HepG2 (cell line): ENCODE measurements at regions of chr6 and their contacts with region 1.

Region 1: DNA sequence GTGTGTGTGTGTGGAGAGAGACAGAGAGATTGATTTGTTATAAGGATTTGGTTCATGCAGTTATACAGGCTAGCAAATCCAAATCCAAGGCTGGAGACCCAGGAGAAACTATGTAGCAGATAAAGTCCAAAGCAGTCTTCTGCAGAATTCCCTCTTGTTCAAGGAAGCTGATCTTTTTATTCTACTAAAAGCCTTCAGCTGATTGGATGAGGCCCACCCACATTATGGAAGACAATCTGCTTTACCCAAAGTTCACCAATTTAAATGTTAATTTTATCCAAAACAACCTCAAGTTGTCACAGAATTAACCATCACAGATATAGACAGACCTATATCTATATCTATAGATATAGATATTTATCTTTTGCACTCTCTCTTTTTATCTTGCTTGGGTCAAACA is 67.0 kb downstream of the TPBG start:
- DNase-seq: no peak
- ATAC-seq: no peak
- H3K4me3 ChIP-seq: no peak overlapping the region
- H3K27ac ChIP-seq: no peak overlapping the region
- H3K4me1 ChIP-seq: no peaks in the 10 kb centered on the region
- H3K27me3 ChIP-seq: no peaks in the 10 kb centered on the region
- CTCF ChIP-seq: no peak
- EP300 ChIP-seq: no peak
- POLR2A ChIP-seq: no peak
- RAD21 ChIP-seq: no peak

Region 2: DNA sequence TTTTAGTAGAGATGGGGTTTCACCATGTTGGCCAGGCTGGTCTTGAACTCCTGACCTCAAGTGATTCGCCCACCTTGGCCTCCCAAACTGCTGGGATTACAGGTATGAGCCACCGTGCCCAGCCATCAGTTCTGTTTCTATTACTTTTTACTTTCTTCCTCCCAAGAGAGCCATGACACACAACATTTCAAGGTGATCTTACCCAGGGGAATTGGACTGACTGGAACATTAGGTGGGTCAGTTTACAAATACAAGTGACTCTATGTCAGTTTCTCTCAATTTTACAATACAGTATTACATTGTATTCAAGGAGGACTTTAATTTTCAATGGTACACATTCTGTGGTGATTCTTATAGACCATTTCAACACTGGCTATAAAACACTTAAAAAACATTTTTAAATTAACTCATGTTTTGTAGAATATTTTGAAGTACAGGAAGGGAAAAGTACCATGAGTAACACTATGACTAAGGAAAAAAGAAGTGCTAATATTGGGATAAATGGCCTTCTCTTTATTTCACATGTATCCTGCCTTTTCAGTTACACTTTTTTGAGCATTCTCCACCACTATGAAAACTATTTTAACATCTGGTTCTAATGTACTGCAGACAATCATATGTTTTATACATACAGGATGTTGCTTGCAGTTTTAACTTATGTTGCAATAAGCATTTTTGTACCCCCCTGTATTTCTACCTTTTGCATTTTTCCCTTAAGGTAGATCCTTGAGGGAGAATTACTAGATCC is 58.6 kb before region 1 on chr6:
- CTCF ChIA-PET with region 1: no interaction called
- POLR2A ChIA-PET with region 1: no interaction called
- in situ Hi-C with region 1: no loop called
- intact Hi-C with region 1: no loop called
- DNase-seq: no peak
- ATAC-seq: no peak
- H3K4me3 ChIP-seq: no peak overlapping the region
- H3K27ac ChIP-seq: no peak overlapping the region
- H3K4me1 ChIP-seq: no peaks in the 10 kb centered on the region
- H3K27me3 ChIP-seq: no peaks in the 10 kb centered on the region
- CTCF ChIP-seq: no peak
- EP300 ChIP-seq: no peak
- POLR2A ChIP-seq: no peak
- RAD21 ChIP-seq: no peak

Region 3: GRCh38 chr6:82396964-82397751 is 33.5 kb before region 1 on chr6:
- CTCF ChIA-PET with region 1: no interaction called
- POLR2A ChIA-PET with region 1: no interaction called
- in situ Hi-C with region 1: no loop called
- intact Hi-C with region 1: loop called (anchors 2 kb)
- DNase-seq: no peak
- ATAC-seq: no peak
- H3K4me3 ChIP-seq: no peak overlapping the region
- H3K27ac ChIP-seq: no peak overlapping the region
- H3K4me1 ChIP-seq: no peaks in the 10 kb centered on the region
- H3K27me3 ChIP-seq: no peaks in the 10 kb centered on the region
- CTCF ChIP-seq: no peak
- EP300 ChIP-seq: no peak
- POLR2A ChIP-seq: no peak
- RAD21 ChIP-seq: no peak